Caco-2 (cell line): ENCODE measurements at regions of chr7 and their contacts with region 1.

Region 1: GRCh38 chr7:25951031-25951948 is 200.7 kb upstream of the NFE2L3 start:
- DNase-seq: peak; percentile 97 to 98
- H3K4me3 ChIP-seq: peak overlapping the region; percentile 77
- H3K4me3 Mint-ChIP-seq: peak overlapping the region; percentile 80
- H3K27ac Mint-ChIP-seq: peak overlapping the region; percentile 63
- H3K4me1 ChIP-seq: peaks cover 16% of the 10 kb centered on the region; the same call in 1 of the 2 replicates
- H3K4me1 Mint-ChIP-seq: peaks cover 29% of the 10 kb centered on the region
- H3K27me3 ChIP-seq: no peaks in the 10 kb centered on the region
- H3K27me3 Mint-ChIP-seq: no peaks in the 10 kb centered on the region
- CTCF ChIP-seq: no peak

Region 2: GRCh38 chr7:25862260-25863037 is 88.8 kb before region 1 on chr7:
- CTCF ChIA-PET with region 1: no interaction called
- POLR2A ChIA-PET with region 1: no interaction called
- intact Hi-C with region 1: loop called (anchors 1 kb)
- DNase-seq: peak; percentile 99 to 100
- H3K4me3 ChIP-seq: no peak overlapping the region
- H3K4me3 Mint-ChIP-seq: peak overlapping the region; percentile 71
- H3K27ac Mint-ChIP-seq: peak overlapping the region; percentile 19
- H3K4me1 ChIP-seq: no peaks in the 10 kb centered on the region
- H3K4me1 Mint-ChIP-seq: no peaks in the 10 kb centered on the region
- H3K27me3 ChIP-seq: no peaks in the 10 kb centered on the region
- H3K27me3 Mint-ChIP-seq: peaks cover 19% of the 10 kb centered on the region
- CTCF ChIP-seq: no peak

Region 3: DNA sequence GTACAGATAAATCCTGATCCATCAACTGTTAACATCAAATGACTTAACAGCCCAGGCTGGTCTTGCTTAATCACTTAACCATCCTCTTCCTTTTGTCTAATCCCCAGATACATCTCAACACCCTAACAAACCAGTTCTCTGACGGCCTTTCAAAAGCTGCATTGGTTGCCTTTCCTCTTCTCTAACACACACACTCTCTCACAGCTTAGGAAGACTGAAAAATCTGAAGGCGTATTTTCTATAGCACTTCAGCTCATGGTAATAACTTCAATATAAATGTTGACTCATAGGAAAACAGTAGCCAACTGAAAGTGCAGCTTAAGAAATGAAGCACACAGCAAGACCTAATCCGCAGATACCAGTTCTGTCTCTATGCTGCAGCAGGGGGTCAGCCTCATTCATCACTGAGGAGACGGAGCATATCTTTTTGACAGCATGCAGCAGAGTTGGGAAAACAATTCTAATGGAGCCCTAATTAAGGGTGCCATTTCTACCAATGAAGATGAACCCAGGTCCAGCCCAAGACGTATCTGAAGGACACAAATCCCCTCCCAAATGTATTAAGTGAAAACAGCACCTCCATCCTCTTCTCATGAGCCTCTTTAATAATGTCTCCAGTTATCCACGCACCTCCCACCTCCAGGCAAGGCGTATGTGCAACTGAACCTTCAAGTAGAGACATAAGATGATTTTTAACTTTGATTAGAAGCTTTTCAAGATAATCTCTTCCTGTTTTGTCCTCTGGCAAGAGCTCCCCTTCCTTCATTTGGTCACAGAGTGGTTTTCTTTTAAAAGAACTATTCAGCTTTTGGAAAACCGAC is 11.0 kb before region 1 on chr7:
- CTCF ChIA-PET with region 1: no interaction called
- POLR2A ChIA-PET with region 1: no interaction called
- intact Hi-C with region 1: no loop called
- DNase-seq: no peak
- H3K4me3 ChIP-seq: no peak overlapping the region
- H3K4me3 Mint-ChIP-seq: no peak overlapping the region
- H3K27ac Mint-ChIP-seq: no peak overlapping the region
- H3K4me1 ChIP-seq: no peaks in the 10 kb centered on the region
- H3K4me1 Mint-ChIP-seq: peaks cover 7% of the 10 kb centered on the region
- H3K27me3 ChIP-seq: no peaks in the 10 kb centered on the region
- H3K27me3 Mint-ChIP-seq: peaks cover 13% of the 10 kb centered on the region
- CTCF ChIP-seq: no peak

Region 4: GRCh38 chr7:25989140-25989705 is 37.9 kb after region 1 on chr7:
- CTCF ChIA-PET with region 1: no interaction called
- POLR2A ChIA-PET with region 1: no interaction called
- intact Hi-C with region 1: loop called (anchors 5 kb)
- DNase-seq: peak; percentile 43 to 52
- H3K4me3 ChIP-seq: no peak overlapping the region
- H3K4me3 Mint-ChIP-seq: peak overlapping the region; percentile 2
- H3K27ac Mint-ChIP-seq: peak overlapping the region; percentile 11
- H3K4me1 ChIP-seq: peaks cover 30% of the 10 kb centered on the region
- H3K4me1 Mint-ChIP-seq: peaks cover 29% of the 10 kb centered on the region
- H3K27me3 ChIP-seq: no peaks in the 10 kb centered on the region
- H3K27me3 Mint-ChIP-seq: no peaks in the 10 kb centered on the region
- CTCF ChIP-seq: no peak